H1 (cell line): ENCODE measurements at regions of chr10 and their contacts with region 1.

Region 1: DNA sequence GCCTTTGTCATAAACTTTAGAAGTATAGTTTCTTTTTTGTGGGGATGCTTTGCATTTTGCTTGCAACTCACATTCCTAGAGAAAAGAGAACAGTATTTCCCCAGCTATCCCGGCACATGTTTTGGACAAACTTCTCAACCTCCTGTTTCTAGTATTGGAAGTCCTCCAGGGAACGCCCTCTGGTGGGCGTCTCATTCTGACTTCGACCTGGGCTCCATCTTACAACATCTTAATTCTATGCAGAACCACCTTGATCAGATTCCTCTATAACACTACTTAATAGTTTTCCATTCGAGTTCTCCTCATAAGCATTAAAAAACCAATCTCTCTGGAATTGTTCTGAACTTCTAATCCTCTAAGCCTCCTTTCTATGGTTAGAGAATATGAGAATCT is 139.5 kb upstream of the FZD8 start:
- DNase-seq: peak in 1 of 2 experiments; percentile 58
- H3K4me3 ChIP-seq: no peak overlapping the region
- H3K27ac ChIP-seq: no peak overlapping the region
- H3K4me1 ChIP-seq: peaks cover 0 to 9% (median 2%) of the 10 kb centered on the region in 4 experiments; a peak in 2 of 7 replicates
- H3K27me3 ChIP-seq: no peaks in the 10 kb centered on the region
- CTCF ChIP-seq: peak; percentile 35 to 55 (median 50)
- EP300 ChIP-seq: no peak
- POLR2A ChIP-seq: no peak
- RAD21 ChIP-seq: peak; percentile 57 to 65

Region 2: DNA sequence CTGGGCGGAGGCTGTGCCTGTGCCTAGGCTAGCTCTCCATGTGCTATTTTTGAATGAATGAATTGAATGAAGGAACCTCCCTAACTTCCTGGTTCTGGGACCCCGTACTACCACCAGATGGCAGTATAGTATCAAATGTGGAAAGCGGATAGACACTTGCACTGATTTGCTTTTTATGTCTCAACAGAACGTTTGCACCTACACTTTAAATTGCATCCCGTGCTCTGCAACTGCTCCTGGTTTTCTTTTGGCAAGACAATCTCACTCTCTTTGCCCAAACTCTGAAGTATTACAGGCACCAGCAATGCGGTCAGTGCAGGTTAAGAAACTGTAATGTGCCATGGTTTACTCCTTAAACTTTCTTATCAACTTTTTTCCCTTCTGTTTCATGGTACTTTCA is 146.1 kb before region 1 on chr10:
- CTCF ChIA-PET with region 1: interaction called, 13 read pairs
- POLR2A ChIA-PET with region 1: no interaction called
- DNase-seq: peak in 1 of 2 experiments; percentile 62
- H3K4me3 ChIP-seq: no peak overlapping the region
- H3K27ac ChIP-seq: no peak overlapping the region
- H3K4me1 ChIP-seq: peaks cover 2 to 20% (median 13%) of the 10 kb centered on the region in 4 experiments
- H3K27me3 ChIP-seq: peaks cover 3 to 7% (median 5%) of the 10 kb centered on the region in 4 experiments; a peak in 6 of 7 replicates
- CTCF ChIP-seq: peak in 2 of 3 experiments; percentile 74 to 85; a peak in 3 of 4 replicates
- EP300 ChIP-seq: no peak
- POLR2A ChIP-seq: no peak
- RAD21 ChIP-seq: peak; percentile 97

Region 3: GRCh38 chr10:35643151-35644044 is 138.2 kb before region 1 on chr10:
- CTCF ChIA-PET with region 1: interaction called, 13 read pairs
- POLR2A ChIA-PET with region 1: no interaction called
- DNase-seq: peak in 1 of 2 experiments; percentile 78
- H3K4me3 ChIP-seq: peak overlapping the region; percentile 63 to 82 (median 67)
- H3K27ac ChIP-seq: no peak overlapping the region
- H3K4me1 ChIP-seq: peaks cover 0 to 11% (median 8%) of the 10 kb centered on the region in 4 experiments; a peak in 6 of 7 replicates
- H3K27me3 ChIP-seq: peaks cover 3 to 13% (median 6%) of the 10 kb centered on the region in 4 experiments
- CTCF ChIP-seq: no peak
- EP300 ChIP-seq: no peak; a peak in 1 of 3 replicates
- POLR2A ChIP-seq: no peak
- RAD21 ChIP-seq: peak in 1 of 2 experiments; percentile 11; a peak in 2 of 4 replicates

Region 4: DNA sequence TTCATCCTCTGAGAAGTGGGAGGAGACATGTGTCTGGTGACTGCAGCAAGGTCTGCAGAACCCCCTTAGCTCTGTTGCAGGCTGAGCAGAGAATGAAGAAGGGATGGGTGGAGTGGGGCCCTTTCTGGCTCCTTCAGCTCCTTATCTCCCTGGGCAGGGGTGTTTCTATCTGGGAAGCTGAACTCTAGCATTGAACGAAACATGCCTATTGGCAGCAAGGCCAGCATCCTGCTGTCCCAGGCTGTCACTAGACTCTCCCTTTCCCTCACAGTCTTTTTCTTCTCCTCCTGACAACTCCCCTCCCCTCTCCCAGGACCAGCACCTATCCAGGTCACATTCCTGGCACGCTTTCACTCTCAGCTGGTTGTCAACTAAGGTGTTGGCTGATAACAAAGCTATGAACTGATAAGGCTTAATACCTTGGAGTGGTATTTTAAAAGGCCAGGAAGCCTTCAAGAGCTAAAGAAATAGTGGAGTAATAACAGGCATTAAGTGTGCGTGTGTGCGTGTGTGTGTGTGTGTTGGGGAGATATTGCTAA is 10.8 kb before region 1 on chr10:
- CTCF ChIA-PET with region 1: interaction called, 21 read pairs
- POLR2A ChIA-PET with region 1: interaction called, 4 read pairs
- DNase-seq: no peak
- H3K4me3 ChIP-seq: no peak overlapping the region
- H3K27ac ChIP-seq: no peak overlapping the region
- H3K4me1 ChIP-seq: peaks cover 2 to 6% (median 3%) of the 10 kb centered on the region in 4 experiments; a peak in 3 of 7 replicates
- H3K27me3 ChIP-seq: no peaks in the 10 kb centered on the region
- CTCF ChIP-seq: no peak
- EP300 ChIP-seq: no peak
- POLR2A ChIP-seq: no peak
- RAD21 ChIP-seq: no peak